Ovary (tissue), 10 donors: ENCODE measurements at regions of chr18 and their contacts with region 1.

Region 1: DNA sequence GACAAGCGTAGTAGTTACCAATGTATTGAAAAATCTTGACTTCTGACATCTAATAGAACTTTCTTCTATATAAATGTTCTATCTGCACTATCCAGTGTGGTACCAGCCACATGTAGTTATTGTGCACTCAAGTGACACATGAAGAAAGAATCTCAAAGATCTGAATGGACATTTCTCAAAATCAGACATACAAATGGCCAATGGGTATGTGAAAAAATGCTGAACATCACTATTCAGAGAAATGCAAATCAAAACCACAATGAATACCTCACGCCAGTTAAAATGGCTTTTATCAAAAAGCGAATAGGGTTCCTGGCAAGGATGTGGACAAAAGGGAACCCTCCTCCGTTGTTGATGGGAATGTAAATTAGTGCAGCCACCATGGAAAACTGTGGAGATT is 37.5 kb upstream of the SMCHD1 start:
- DNase-seq: no peak
- H3K4me3 ChIP-seq: no peak overlapping the region
- H3K27ac ChIP-seq: no peak overlapping the region
- H3K4me1 ChIP-seq: no peaks in the 10 kb centered on the region
- H3K27me3 ChIP-seq: no peaks in the 10 kb centered on the region
- CTCF ChIP-seq: no peak
- EP300 ChIP-seq: no peak
- POLR2A ChIP-seq: no peak

Region 2: DNA sequence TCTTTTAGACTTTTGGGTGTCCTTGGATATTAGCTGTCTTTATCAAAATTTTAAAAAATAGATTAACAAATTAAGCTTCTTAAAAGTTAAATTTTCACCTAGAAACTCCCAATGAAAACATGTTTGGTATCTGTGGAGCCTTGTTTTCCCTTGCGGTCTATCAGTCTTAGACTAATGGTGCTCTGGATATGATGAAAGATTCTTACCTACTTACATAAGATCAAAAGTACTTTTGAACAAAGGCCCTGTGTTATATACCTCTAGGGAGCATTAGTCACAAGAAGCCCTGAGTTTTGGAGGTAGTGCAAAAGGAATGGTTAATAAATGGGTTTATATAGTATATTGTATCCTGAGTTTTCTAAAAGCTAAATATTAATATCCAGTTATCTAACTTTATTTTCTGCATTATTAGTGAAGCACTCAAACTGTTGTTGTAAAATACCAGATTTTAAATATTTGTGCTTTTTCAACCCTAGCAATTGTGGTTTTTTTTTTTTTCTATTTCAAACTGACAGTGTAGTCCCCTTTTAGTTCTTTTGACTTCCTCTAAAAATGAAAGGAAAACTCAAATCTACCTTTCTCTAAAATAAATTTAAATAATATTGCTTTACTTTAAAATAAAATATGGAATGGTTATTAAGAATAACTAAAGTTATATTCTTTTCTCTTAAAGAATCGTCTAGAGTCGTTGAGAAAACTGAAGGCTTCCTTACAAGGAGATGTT is 28.5 kb before region 1 on chr18:
- intact Hi-C with region 1: no loop called
- DNase-seq: no peak
- H3K4me3 ChIP-seq: peak overlapping the region; percentile 24
- H3K27ac ChIP-seq: no peak overlapping the region
- H3K4me1 ChIP-seq: no peaks in the 10 kb centered on the region
- H3K27me3 ChIP-seq: no peaks in the 10 kb centered on the region
- CTCF ChIP-seq: no peak
- EP300 ChIP-seq: no peak
- POLR2A ChIP-seq: no peak

Region 3: DNA sequence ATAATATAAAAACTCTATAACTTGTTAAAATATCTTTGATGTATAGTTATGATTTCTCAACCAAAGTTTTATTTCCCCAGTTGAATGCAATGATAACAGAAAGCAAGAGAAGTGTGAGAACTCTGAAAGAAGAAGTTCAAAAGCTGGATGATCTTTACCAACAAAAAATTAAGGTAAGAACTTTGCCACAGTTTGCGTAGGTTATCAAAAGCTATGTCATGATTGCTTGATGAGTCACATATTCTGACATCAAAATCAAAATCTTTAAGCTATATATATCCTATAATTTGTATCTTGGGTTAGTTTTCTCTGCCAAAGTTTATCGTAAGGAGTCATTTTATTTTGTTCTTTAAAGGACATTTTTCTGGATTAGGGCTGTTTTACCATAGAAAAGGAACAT is 11.7 kb before region 1 on chr18:
- intact Hi-C with region 1: loop called in 1 of 4 experiments (anchors 1 kb)
- DNase-seq: no peak
- H3K4me3 ChIP-seq: no peak overlapping the region
- H3K27ac ChIP-seq: no peak overlapping the region
- H3K4me1 ChIP-seq: no peaks in the 10 kb centered on the region
- H3K27me3 ChIP-seq: no peaks in the 10 kb centered on the region
- CTCF ChIP-seq: no peak
- EP300 ChIP-seq: no peak
- POLR2A ChIP-seq: no peak